GM12878 (cell line): ENCODE measurements at regions of chrX and their contacts with region 1.

Region 1: DNA sequence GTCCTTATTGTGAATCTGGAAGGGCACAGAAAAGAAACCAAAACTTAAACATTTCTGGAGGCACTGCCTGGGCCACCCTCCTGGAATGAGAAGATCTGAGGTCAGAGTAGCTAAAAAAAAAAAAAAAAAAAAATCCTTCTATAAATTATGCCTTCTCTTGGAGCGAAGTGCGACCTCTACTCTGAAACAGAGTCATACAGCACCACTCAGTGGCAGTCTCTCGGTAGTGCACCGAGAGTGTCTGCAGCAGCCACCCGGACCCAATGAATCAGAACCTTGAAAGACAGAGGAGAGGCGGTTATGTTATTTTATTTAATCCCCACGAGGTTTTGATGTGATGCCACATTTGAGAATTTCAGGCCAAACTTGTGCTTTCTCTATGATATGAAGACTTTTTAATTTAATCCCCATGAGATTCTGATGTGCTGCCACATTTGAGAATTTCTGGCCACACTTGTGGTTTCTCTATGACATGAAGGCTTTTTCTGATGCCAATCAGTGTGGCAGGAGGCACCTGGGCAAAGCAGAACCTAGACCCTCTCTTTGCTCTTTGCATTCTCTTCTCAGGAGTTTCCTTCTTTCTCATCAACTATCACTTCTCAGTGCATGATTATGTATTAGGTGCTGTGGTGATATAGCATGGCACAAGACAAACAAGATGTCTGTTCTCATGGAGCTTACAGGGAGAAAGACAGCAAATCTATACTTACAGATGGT is 5.6 kb upstream of the CT47C1 start:
- DNase-seq: no peak
- ATAC-seq: peak; percentile 80
- H3K4me3 ChIP-seq: no peak overlapping the region
- H3K27ac ChIP-seq: no peak overlapping the region
- H3K4me1 ChIP-seq: no peaks in the 10 kb centered on the region
- H3K27me3 ChIP-seq: peaks cover 0 to 2% of the 10 kb centered on the region in 2 experiments; a peak in 2 of 4 replicates
- CTCF ChIP-seq: peak in 2 of 3 experiments; percentile 47 to 51; a peak in 5 of 6 replicates
- EP300 ChIP-seq: no peak
- POLR2A ChIP-seq: no peak
- RAD21 ChIP-seq: peak; percentile 66

Region 2: GRCh38 chrX:118847676-118848075 is 219.5 kb before region 1 on chrX:
- CTCF ChIA-PET with region 1: interaction called, 8 read pairs
- POLR2A ChIA-PET with region 1: no interaction called
- RAD21 ChIA-PET with region 1: no interaction called
- SMC1A ChIA-PET with region 1: interaction called, 5 read pairs
- in situ Hi-C with region 1: loop called (anchors 10 kb)
- intact Hi-C with region 1: loop called (anchors 5 kb)
- DNase-seq: no peak
- ATAC-seq: peak; percentile 66
- H3K4me3 ChIP-seq: no peak overlapping the region
- H3K27ac ChIP-seq: no peak overlapping the region
- H3K4me1 ChIP-seq: no peaks in the 10 kb centered on the region
- H3K27me3 ChIP-seq: peaks cover 0 to 2% of the 10 kb centered on the region in 2 experiments; a peak in 1 of 4 replicates
- CTCF ChIP-seq: peak; percentile 64 to 67 (median 64)
- EP300 ChIP-seq: no peak
- POLR2A ChIP-seq: no peak
- RAD21 ChIP-seq: peak; percentile 74

Region 3: DNA sequence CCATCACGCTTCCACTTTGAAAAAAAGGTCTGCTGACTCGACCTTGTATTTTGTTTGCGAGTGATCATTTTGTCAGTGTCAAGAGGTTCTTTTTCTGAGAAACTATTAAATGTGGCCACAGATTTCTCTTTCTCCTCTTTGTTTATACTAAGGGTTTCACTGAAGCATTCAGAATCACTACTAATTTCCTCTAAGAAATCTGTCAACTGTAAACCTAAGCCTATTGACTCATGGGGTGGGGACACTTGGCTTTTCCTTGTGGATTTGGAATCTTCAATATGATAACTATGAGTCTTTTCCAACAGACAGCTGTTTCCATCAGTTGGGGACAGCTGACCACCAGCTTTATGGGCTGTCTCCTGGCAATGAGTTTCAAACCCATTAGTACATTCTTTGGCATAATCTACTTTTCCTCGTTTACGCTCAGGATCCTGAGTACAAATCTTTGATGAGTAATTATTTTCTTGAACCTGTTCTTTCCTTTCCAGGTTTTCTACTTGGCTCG is 182.7 kb after region 1 on chrX:
- CTCF ChIA-PET with region 1: no interaction called
- POLR2A ChIA-PET with region 1: no interaction called
- RAD21 ChIA-PET with region 1: no interaction called
- SMC1A ChIA-PET with region 1: no interaction called
- in situ Hi-C with region 1: no loop called
- intact Hi-C with region 1: no loop called
- DNase-seq: no peak
- ATAC-seq: no peak
- H3K4me3 ChIP-seq: no peak overlapping the region
- H3K27ac ChIP-seq: no peak overlapping the region
- H3K4me1 ChIP-seq: no peaks in the 10 kb centered on the region
- H3K27me3 ChIP-seq: no peaks in the 10 kb centered on the region; a peak in 1 of 4 replicates
- CTCF ChIP-seq: no peak
- EP300 ChIP-seq: no peak
- POLR2A ChIP-seq: no peak
- RAD21 ChIP-seq: no peak

Region 4: GRCh38 chrX:119359618-119360382 is 292.6 kb after region 1 on chrX:
- CTCF ChIA-PET with region 1: no interaction called
- POLR2A ChIA-PET with region 1: no interaction called
- RAD21 ChIA-PET with region 1: no interaction called
- SMC1A ChIA-PET with region 1: no interaction called
- in situ Hi-C with region 1: no loop called
- intact Hi-C with region 1: no loop called
- DNase-seq: no peak
- ATAC-seq: no peak
- H3K4me3 ChIP-seq: no peak overlapping the region
- H3K27ac ChIP-seq: no peak overlapping the region
- H3K4me1 ChIP-seq: no peaks in the 10 kb centered on the region
- H3K27me3 ChIP-seq: no peaks in the 10 kb centered on the region; a peak in 1 of 4 replicates
- CTCF ChIP-seq: no peak
- EP300 ChIP-seq: no peak
- POLR2A ChIP-seq: no peak
- RAD21 ChIP-seq: no peak